CD8-positive, alpha-beta memory T cell (primary cell): ENCODE measurements at regions of chr16 and their contacts with region 1.

Region 1: GRCh38 chr16:21584817-21585216 is 14.6 kb upstream of the METTL9 start:
- DNase-seq: no peak
- H3K4me3 ChIP-seq: no peak overlapping the region
- H3K4me3 Mint-ChIP-seq: no peak overlapping the region
- H3K27ac ChIP-seq: no peak overlapping the region
- H3K27ac Mint-ChIP-seq: peak overlapping the region in 1 of 8 donors; percentile 22
- H3K4me1 ChIP-seq: no peaks in the 10 kb centered on the region
- H3K4me1 Mint-ChIP-seq: peaks cover 0 to 4% (median 1%) of the 10 kb centered on the region in 3 donors
- H3K27me3 ChIP-seq: no peaks in the 10 kb centered on the region
- H3K27me3 Mint-ChIP-seq: no peaks in the 10 kb centered on the region

Region 2: DNA sequence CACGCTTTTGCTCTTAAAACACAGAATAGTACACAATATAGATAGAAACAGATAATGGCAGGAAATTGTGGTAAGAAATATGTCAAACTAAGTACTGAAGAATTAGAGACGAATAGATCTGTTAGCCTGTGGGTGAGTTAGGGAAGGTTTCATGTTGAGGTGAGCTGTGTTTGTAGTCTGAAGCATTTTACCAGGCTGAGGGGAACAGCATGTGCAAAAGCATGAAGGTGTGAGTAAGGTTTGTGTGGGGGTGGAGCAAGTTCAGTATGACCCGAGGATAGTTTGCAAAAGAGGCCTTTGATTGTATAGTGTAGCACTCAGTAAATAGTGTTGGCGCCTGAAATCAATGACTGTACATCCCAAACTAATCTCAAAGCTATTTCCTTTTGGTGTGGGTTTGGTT is 53.8 kb after region 1 on chr16:
- CTCF ChIA-PET with region 1: interaction called, 54 read pairs
- POLR2A ChIA-PET with region 1: no interaction called
- DNase-seq: peak in 1 of 5 donors; percentile 22
- H3K4me3 ChIP-seq: no peak overlapping the region
- H3K4me3 Mint-ChIP-seq: peak overlapping the region in 6 of 7 donors; percentile 1 to 60 (median 30)
- H3K27ac ChIP-seq: no peak overlapping the region
- H3K27ac Mint-ChIP-seq: peak overlapping the region; percentile 14 to 89 (median 82)
- H3K4me1 ChIP-seq: peaks cover 30% of the 10 kb centered on the region
- H3K4me1 Mint-ChIP-seq: peaks cover 29 to 39% (median 39%) of the 10 kb centered on the region in 3 donors
- H3K27me3 ChIP-seq: no peaks in the 10 kb centered on the region
- H3K27me3 Mint-ChIP-seq: no peaks in the 10 kb centered on the region